ENCODE measurements at regions of chr16 and their contacts with region 1.

Region 1: GRCh38 chr16:73036074-73036826 is 11.7 kb downstream of the ZFHX3 start:
- DNase-seq: peak; percentile 49 to 81
- H3K4me3 ChIP-seq: peak overlapping the region; percentile 36; the same call in 1 of the 2 replicates
- H3K27ac ChIP-seq: peak overlapping the region; percentile 57
- H3K4me1 ChIP-seq: peaks cover 50% of the 10 kb centered on the region
- H3K27me3 ChIP-seq: no peaks in the 10 kb centered on the region
- CTCF ChIP-seq: no peak

Region 2: DNA sequence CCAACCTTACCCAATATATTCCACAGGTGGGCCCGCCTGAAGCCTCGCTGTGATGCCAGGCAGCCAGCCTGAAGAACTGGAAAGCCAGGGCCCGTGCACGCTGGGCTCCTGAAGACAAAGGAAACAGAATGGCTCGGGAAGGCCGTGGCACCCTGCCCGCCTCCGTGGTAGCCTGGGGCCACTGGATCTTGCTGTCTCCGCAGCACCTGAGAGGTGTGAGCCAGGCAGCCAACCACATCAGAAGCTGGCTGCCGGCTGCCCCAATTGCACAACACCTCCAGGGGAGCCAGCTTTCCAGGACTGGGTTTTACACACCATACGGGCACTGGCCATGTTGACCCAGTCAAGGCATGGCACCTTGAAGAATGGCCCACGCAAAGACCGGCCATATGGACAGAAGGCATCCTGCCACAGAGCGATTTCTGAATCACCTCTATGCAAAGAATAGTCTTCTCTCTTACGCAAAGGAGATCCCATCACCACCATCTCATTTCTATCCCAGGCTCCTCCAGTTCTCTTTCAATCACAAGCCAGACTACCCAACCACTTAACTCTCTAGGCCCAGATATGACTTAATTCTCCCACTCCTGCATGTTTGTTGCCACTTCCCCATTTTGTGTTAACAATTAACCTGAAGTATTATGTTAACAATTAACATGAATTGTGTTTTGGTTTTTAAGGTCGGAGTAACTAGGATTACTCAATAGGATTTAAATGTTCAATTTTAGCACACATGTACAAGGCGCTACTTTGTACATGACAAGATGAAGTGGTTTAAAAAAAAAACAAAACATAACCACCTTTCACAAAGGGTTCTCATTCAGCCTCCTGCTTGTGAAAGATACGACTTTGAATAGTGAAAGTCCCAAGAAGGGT is 20.4 kb before region 1 on chr16:
- CTCF ChIA-PET with region 1: interaction called, 9 read pairs
- POLR2A ChIA-PET with region 1: no interaction called
- intact Hi-C with region 1: loop called (anchors 1 kb)
- DNase-seq: peak; percentile 94 to 96
- H3K4me3 ChIP-seq: no peak overlapping the region; the same call in 1 of the 2 replicates
- H3K27ac ChIP-seq: peak overlapping the region; percentile 49
- H3K4me1 ChIP-seq: peaks cover 70% of the 10 kb centered on the region
- H3K27me3 ChIP-seq: no peaks in the 10 kb centered on the region
- CTCF ChIP-seq: no peak

Region 3: DNA sequence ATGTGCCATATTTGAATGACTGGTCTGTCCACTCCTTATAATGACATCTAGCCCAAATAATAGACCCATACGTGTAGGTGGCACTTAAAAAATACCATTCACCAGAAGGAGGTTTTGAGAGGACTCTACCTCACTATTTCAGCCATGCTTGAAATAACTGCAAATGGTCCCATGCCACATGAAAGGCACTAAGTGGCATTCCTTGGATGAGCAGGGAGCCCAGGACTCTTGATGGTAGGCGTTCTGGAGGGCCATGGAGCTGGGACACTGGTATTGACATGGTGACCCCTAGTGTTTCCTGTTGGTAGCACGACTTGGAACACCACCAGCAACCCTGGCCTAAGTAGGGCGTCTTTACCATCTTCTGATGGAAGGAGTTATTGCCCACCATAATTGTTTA is 160.4 kb after region 1 on chr16:
- CTCF ChIA-PET with region 1: no interaction called
- POLR2A ChIA-PET with region 1: no interaction called
- intact Hi-C with region 1: loop called (anchors 1 kb)
- DNase-seq: peak; percentile 38 to 49
- H3K4me3 ChIP-seq: no peak overlapping the region
- H3K27ac ChIP-seq: no peak overlapping the region
- H3K4me1 ChIP-seq: no peaks in the 10 kb centered on the region
- H3K27me3 ChIP-seq: peaks cover 2% of the 10 kb centered on the region; the same call in 1 of the 2 replicates
- CTCF ChIP-seq: peak; percentile 70